ENCODE measurements at regions of chr1 and their contacts with region 1.

Region 1: GRCh38 chr1:233790662-233791375 is 113.7 kb upstream of the SLC35F3 start:
- DNase-seq: peak; percentile 50
- H3K4me3 Mint-ChIP-seq: no peak overlapping the region
- H3K27ac Mint-ChIP-seq: no peak overlapping the region
- H3K4me1 Mint-ChIP-seq: no peaks in the 10 kb centered on the region
- H3K27me3 Mint-ChIP-seq: no peaks in the 10 kb centered on the region
- CTCF ChIP-seq: peak; percentile 82

Region 2: DNA sequence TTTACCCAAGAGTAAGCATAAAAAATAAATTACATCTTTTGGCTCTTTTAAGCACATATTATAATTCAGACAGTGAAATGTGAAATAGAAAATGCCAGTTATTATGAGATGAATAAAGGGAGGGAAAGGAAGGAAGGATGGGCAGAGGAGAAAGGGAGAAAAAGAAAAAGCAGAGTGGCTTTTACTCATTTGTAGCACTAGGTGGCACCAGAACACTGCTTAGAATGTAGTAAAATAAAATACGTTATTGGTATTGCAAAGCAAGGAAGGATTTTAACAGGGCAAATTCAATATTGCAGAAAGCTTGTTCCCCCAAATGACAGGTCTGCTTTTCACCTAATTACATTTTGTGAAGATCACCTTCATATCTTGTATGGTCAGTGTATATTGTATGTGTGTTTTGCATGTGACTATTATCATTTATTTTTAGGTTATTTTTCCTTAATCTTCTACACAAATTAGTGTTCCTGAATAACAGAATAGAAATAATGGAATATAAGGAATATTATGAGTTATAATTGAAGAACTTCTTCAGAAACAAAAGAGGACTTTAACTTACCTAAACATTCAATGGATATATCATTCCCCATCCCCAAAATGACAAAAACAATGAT is 486.2 kb before region 1 on chr1:
- CTCF ChIA-PET with region 1: no interaction called
- intact Hi-C with region 1: loop called (anchors 2 kb)
- DNase-seq: no peak
- H3K4me3 Mint-ChIP-seq: no peak overlapping the region
- H3K27ac Mint-ChIP-seq: no peak overlapping the region
- H3K4me1 Mint-ChIP-seq: peaks cover 8% of the 10 kb centered on the region
- H3K27me3 Mint-ChIP-seq: no peaks in the 10 kb centered on the region
- CTCF ChIP-seq: peak; percentile 67

Region 3: DNA sequence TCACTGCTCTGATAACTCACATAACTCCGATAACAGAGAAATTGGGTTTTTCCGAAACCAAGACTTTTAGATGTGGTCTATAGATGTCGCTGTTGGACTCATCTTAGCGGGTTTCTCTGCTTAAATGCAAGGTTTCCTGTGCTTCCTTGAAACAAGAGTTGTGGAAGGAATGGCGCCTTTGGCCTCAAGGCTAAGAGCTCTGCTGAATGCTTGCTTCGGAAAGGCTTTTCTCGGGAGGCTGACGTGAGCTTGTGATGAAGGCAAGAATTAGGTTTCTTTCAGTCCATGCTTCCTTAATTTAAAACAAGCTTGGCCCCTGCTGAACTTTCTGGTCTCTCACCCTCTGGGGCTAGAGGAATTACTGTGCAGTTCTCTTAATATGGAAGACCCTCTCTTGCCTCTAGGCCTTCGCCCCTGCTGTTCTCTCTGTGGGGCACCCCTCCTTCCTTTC is 349.8 kb before region 1 on chr1:
- CTCF ChIA-PET with region 1: interaction called, 17 read pairs
- intact Hi-C with region 1: loop called (anchors 1 kb)
- DNase-seq: peak; percentile 40
- H3K4me3 Mint-ChIP-seq: no peak overlapping the region
- H3K27ac Mint-ChIP-seq: no peak overlapping the region
- H3K4me1 Mint-ChIP-seq: no peaks in the 10 kb centered on the region
- H3K27me3 Mint-ChIP-seq: no peaks in the 10 kb centered on the region
- CTCF ChIP-seq: peak; percentile 67

Region 4: DNA sequence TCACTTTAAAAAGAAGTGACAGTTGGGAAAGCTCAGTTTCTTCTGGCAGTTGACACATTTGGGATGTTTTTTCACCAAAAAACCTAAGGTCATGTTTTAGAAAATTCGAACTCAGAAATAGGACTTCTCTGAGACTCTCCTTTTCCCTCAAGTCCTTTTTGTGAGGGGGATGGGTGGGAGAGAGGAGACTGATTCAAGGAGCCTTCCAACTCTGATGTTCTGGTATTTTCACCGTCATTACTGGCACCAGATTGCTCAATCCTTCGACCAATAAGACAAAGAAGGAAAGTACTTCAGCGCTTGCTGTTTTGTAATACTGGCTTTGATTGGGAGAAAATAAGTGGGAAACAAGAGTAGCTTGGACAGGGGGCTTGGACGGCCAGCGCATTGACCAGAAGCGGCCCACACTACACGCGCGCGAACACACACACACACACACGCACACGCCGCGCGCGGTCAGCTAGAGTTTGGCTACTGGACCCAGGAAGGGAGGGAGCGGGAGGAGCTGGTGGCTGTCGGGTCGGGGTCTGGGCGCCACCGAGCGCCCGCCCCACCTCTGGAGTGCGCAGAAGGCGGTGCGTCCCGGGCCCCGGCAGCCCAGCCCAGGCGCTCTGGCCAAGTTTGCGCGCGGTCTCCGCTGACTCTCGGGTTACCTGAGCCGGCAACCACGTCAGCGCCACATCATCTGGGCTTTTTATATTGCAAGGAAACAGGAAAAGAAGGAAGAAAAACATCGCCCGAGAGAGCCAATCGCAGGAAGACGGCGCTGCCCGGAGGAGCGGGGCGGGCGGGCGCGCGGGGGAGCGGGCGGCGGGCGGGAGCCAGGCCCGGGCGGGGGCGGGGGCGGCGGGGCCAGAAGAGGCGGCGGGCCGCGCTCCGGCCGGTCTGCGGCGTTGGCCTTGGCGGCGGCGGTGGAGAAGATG is 177.3 kb before region 1 on chr1 and contains the start of gene KCNK1:
- CTCF ChIA-PET with region 1: no interaction called
- intact Hi-C with region 1: loop called (anchors 5 kb)
- DNase-seq: peak; percentile 90
- H3K4me3 Mint-ChIP-seq: peak within 1 kb of the TSS; percentile 89
- H3K27ac Mint-ChIP-seq: peak within 1 kb of the TSS; percentile 77
- H3K4me1 Mint-ChIP-seq: peaks cover 22% of the 10 kb centered on the region
- H3K27me3 Mint-ChIP-seq: no peaks in the 10 kb centered on the region
- CTCF ChIP-seq: no peak
- total RNA-seq, gene KCNK1: 38.0 and 39.2 TPM in 2 replicates

Region 5: GRCh38 chr1:233675893-233676292 is 114.9 kb before region 1 on chr1:
- CTCF ChIA-PET with region 1: no interaction called
- intact Hi-C with region 1: loop called (anchors 1 kb)
- DNase-seq: no peak
- H3K4me3 Mint-ChIP-seq: no peak overlapping the region
- H3K27ac Mint-ChIP-seq: peak overlapping the region; percentile 73
- H3K4me1 Mint-ChIP-seq: peaks cover 51% of the 10 kb centered on the region
- H3K27me3 Mint-ChIP-seq: no peaks in the 10 kb centered on the region
- CTCF ChIP-seq: no peak

Region 6: DNA sequence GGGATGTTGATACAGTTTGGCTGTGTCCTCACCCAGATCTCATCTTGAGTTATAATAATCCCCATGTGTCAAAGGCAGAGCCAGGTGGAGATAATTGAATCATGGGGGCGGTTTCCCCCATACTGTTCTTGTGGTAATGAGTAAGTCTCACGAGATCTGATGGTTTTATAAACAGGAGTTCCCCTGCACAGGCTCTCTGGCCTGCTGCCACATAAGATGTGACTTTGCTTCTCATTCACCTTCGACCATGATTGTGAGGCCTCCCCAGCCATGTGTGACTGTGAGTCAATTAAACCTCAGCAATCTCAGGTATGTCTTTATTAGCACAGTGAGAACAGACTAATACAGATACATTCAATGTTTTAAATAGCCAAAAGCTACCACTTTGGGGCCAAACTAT is 154.8 kb after region 1 on chr1:
- CTCF ChIA-PET with region 1: no interaction called
- intact Hi-C with region 1: no loop called
- DNase-seq: peak; percentile 53
- H3K4me3 Mint-ChIP-seq: no peak overlapping the region
- H3K27ac Mint-ChIP-seq: peak overlapping the region; percentile 53
- H3K4me1 Mint-ChIP-seq: peaks cover 35% of the 10 kb centered on the region
- H3K27me3 Mint-ChIP-seq: no peaks in the 10 kb centered on the region
- CTCF ChIP-seq: no peak

Measured in Calu3 (cell line).